ENCODE measurements at regions of chr11 and their contacts with region 1.

Region 1: DNA sequence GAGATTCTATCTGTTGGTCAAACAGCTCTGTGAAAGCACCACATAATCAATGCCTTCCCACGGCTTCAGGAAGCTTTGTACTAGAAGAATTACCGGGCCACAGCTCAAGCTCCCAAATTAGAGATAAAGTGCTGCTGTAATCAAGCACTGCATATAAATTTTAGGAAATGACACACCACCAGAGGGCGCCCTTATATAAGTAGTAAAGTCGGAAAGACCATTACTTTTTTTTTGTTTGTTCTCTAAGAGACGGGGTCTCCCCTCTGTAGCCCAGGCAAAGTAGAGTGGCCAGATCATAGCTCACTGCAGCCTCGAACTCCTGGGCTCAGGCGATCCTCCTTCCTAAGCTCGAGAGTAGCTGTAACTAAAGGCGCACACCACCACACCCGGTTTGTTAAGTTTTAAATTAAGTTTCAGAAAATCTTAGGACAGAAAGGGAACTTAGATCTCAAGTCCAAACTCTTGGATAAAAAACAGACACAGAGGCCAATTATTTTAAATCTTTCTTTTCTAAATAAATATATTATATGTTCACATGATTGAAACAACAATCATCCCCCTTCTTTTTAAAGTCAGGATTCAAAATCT is 32.6 kb downstream of the PRCP start:
- DNase-seq: peak; percentile 50 to 86 (median 79)
- ATAC-seq: peak; percentile 52
- H3K4me3 ChIP-seq: no peak overlapping the region
- H3K4me3 Mint-ChIP-seq: no peak overlapping the region
- H3K27ac ChIP-seq: no peak overlapping the region
- H3K27ac Mint-ChIP-seq: no peak overlapping the region
- H3K4me1 ChIP-seq: no peaks in the 10 kb centered on the region
- H3K4me1 Mint-ChIP-seq: peaks cover 9% of the 10 kb centered on the region
- H3K27me3 ChIP-seq: no peaks in the 10 kb centered on the region
- H3K27me3 Mint-ChIP-seq: no peaks in the 10 kb centered on the region
- CTCF ChIP-seq: peak; percentile 90

Region 2: DNA sequence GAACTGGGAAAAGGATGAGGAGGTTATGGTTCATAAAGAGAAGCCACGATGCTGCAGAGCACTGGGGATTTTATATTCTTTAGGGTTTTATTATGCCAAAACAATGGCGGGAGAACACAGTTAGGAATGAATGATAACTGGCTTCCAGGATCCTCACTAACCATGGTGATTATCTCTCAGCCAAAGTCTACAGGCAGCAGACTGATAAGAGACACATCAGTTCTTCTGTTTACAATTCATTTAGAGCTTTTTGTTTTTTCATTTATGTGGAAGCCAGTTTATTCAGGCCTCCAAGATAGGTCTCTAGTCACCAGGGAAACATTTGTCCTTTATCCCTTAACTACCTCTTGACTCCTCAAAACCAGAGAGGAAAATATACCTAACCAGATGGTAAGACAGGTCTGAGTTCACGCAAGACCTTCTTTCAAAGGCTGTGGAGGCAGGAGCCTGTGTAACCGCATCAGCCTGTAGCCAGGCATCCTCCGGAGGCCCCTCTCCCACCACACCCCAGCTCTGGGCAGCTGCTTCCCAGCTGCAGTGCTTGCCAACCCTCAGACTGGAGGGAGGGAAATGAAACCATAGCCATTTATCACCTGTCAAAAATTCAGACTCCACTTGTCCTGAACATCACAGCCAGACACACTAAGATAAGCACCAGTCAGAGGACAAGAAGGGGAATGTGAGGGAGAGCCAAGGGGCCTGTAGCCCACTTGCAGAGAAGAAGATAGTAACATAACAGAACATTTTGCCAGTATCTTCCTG is 76.7 kb before region 1 on chr11:
- CTCF ChIA-PET with region 1: no interaction called
- POLR2A ChIA-PET with region 1: no interaction called
- intact Hi-C with region 1: no loop called
- DNase-seq: no peak
- ATAC-seq: no peak
- H3K4me3 ChIP-seq: no peak overlapping the region
- H3K4me3 Mint-ChIP-seq: no peak overlapping the region
- H3K27ac ChIP-seq: no peak overlapping the region
- H3K27ac Mint-ChIP-seq: no peak overlapping the region
- H3K4me1 ChIP-seq: no peaks in the 10 kb centered on the region
- H3K4me1 Mint-ChIP-seq: no peaks in the 10 kb centered on the region
- H3K27me3 ChIP-seq: no peaks in the 10 kb centered on the region
- H3K27me3 Mint-ChIP-seq: peaks cover 3% of the 10 kb centered on the region
- CTCF ChIP-seq: no peak

Region 3: DNA sequence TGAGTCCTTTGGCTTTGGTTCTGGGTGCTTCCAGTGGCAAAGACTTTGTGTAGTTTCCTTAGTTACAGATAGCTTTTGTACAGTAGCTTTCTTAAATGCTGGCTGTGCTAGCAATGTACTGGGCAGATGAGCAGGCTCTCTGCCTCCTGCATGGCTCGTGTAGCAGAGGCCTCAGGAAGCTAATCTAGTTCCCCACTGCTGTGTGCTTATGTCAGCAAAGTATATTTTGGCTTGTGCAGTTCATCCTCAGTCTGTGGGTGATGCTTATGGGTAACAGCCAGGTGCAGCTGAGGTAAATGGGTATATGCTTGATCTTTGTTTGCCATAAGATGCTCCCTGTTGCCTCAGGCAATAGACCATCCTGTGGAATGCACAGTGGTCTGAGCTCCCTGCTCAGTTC is 64.9 kb before region 1 on chr11:
- CTCF ChIA-PET with region 1: no interaction called
- POLR2A ChIA-PET with region 1: no interaction called
- intact Hi-C with region 1: no loop called
- DNase-seq: no peak
- ATAC-seq: no peak
- H3K4me3 ChIP-seq: no peak overlapping the region
- H3K4me3 Mint-ChIP-seq: no peak overlapping the region
- H3K27ac ChIP-seq: no peak overlapping the region
- H3K27ac Mint-ChIP-seq: no peak overlapping the region
- H3K4me1 ChIP-seq: no peaks in the 10 kb centered on the region
- H3K4me1 Mint-ChIP-seq: no peaks in the 10 kb centered on the region
- H3K27me3 ChIP-seq: no peaks in the 10 kb centered on the region
- H3K27me3 Mint-ChIP-seq: peaks cover 25% of the 10 kb centered on the region
- CTCF ChIP-seq: no peak

Region 4: DNA sequence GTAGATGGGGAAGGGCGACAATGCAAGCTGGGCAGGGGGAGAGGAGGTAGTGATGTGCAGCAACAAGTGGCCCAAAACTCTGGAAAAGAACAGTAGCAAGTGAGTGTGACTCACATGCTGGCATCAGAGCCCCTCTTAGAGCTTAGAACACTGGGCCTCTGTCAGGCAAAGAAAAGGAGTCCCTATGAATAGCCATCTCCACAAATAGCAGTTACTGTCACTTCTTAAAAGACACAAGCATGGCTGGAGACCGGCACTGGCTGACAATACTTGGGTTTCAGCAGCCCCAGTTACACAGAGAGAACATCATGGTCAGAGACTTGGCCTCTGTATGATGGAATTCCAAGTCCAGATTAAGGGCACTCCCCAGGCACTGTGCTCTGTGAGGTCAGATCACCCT is 25.6 kb before region 1 on chr11:
- CTCF ChIA-PET with region 1: interaction called, 6 read pairs
- POLR2A ChIA-PET with region 1: no interaction called
- intact Hi-C with region 1: loop called in 1 of 2 experiments (anchors 2 kb)
- DNase-seq: no peak
- ATAC-seq: no peak
- H3K4me3 ChIP-seq: no peak overlapping the region
- H3K4me3 Mint-ChIP-seq: no peak overlapping the region
- H3K27ac ChIP-seq: no peak overlapping the region
- H3K27ac Mint-ChIP-seq: no peak overlapping the region
- H3K4me1 ChIP-seq: no peaks in the 10 kb centered on the region
- H3K4me1 Mint-ChIP-seq: no peaks in the 10 kb centered on the region
- H3K27me3 ChIP-seq: no peaks in the 10 kb centered on the region
- H3K27me3 Mint-ChIP-seq: no peaks in the 10 kb centered on the region
- CTCF ChIP-seq: no peak

Region 5: GRCh38 chr11:82900277-82901164 is 32.9 kb after region 1 on chr11 and contains the start of gene PRCP:
- CTCF ChIA-PET with region 1: interaction called, 15 read pairs
- POLR2A ChIA-PET with region 1: interaction called, 7 read pairs
- intact Hi-C with region 1: loop called (anchors 1 to 2 kb)
- DNase-seq: peak; percentile 84 to 96 (median 92)
- ATAC-seq: peak; percentile 69
- H3K4me3 ChIP-seq: peak within 1 kb of the TSS; percentile 76 to 93
- H3K4me3 Mint-ChIP-seq: peak within 1 kb of the TSS; percentile 99
- H3K27ac ChIP-seq: peak within 1 kb of the TSS; percentile 94 to 96
- H3K27ac Mint-ChIP-seq: peak within 1 kb of the TSS; percentile 100
- H3K4me1 ChIP-seq: peaks cover 26% of the 10 kb centered on the region
- H3K4me1 Mint-ChIP-seq: peaks cover 48% of the 10 kb centered on the region
- H3K27me3 ChIP-seq: no peaks in the 10 kb centered on the region
- H3K27me3 Mint-ChIP-seq: no peaks in the 10 kb centered on the region
- CTCF ChIP-seq: no peak
- total RNA-seq, gene PRCP: 23.9 to 27.8 TPM

Region 6: DNA sequence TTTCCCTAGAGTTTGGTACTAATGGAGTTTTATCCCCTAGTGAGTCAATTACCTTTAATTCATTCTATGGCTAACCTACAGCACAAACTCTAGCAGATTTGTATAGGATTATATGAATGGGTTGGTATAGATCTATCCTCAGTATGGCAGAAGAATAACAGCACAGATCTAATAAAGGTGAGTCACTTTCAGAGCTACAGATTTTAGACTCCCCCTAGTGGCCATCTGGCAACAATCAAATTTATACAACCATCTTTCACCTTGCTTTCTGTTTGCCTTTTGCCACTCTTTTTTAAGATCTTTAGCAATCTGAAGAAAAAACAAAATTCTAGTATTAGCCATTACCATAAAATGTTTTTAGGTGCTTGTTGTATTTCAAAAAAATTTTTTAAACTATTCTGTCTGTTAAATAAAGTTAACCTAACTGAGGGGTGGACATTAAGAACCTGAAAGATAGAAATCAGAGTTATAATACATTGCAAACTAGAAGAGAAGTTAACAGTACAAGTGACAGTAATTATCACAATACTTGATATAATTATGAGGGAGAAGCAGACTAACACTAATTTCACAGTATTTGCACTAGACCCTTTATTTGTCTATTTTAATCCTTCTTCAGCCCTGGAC is 59.8 kb after region 1 on chr11:
- CTCF ChIA-PET with region 1: interaction called, 9 read pairs
- POLR2A ChIA-PET with region 1: no interaction called
- intact Hi-C with region 1: loop called in 1 of 2 experiments (anchors 1 kb)
- DNase-seq: peak in 6 of 9 experiments; percentile 11 to 83 (median 31)
- ATAC-seq: peak; percentile 98
- H3K4me3 ChIP-seq: no peak overlapping the region
- H3K4me3 Mint-ChIP-seq: peak overlapping the region; percentile 26
- H3K27ac ChIP-seq: no peak overlapping the region
- H3K27ac Mint-ChIP-seq: peak overlapping the region; percentile 60
- H3K4me1 ChIP-seq: peaks cover 40% of the 10 kb centered on the region
- H3K4me1 Mint-ChIP-seq: peaks cover 53% of the 10 kb centered on the region
- H3K27me3 ChIP-seq: no peaks in the 10 kb centered on the region
- H3K27me3 Mint-ChIP-seq: no peaks in the 10 kb centered on the region
- CTCF ChIP-seq: peak; percentile 89

Region 7: DNA sequence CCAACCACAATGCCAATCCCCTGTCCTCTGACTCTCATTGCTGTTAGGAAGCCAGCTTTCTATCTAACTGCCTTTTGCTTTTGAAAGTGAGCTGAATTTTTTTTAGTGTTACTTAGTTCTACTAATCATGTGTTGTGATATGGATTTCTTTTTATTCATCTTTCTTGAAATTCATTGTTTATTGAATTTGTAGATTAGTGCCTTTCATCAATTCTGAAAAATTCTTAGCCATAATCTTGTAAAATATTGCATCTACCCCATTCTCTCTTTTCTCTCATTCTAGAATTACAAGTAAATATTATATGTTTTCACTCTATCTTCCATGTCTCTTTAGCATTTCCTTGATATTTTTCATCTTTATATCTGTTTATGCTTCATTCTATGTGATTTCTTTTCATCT is 81.8 kb after region 1 on chr11:
- CTCF ChIA-PET with region 1: no interaction called
- POLR2A ChIA-PET with region 1: no interaction called
- intact Hi-C with region 1: no loop called
- DNase-seq: no peak
- ATAC-seq: no peak
- H3K4me3 ChIP-seq: no peak overlapping the region
- H3K4me3 Mint-ChIP-seq: no peak overlapping the region
- H3K27ac ChIP-seq: no peak overlapping the region
- H3K27ac Mint-ChIP-seq: no peak overlapping the region
- H3K4me1 ChIP-seq: no peaks in the 10 kb centered on the region
- H3K4me1 Mint-ChIP-seq: peaks cover 5% of the 10 kb centered on the region
- H3K27me3 ChIP-seq: no peaks in the 10 kb centered on the region
- H3K27me3 Mint-ChIP-seq: no peaks in the 10 kb centered on the region
- CTCF ChIP-seq: no peak

Region 8: DNA sequence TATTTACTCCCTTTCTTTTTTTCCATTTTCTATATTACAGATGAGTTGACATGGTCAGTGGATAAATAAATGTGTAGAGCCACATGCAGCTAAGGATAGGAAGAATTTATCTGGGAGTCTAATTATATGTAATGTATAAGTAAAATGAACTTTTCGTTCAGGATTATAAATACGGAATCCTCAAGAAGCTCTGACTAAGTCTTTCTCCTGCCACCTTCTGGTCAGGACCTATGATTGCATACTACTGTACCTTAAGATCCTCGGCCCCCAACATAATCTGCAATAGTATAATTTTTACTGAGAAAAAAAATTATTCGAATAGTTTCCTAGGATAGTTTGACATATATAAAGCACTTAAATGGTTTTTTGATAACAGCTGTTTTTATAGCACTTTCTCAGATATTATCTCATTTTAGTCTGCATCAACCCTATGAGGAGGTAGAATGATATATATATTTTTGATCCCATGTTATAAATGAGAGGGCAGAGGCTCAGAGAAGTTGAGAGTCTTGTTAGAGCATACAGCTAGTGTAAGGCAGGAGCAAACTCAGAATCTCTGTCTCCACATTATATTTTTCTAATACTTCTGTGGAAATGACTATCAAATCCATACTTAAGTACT is 382.5 kb after region 1 on chr11:
- CTCF ChIA-PET with region 1: interaction called, 50 read pairs
- POLR2A ChIA-PET with region 1: interaction called, 5 read pairs
- intact Hi-C with region 1: loop called (anchors 1 to 2 kb)
- DNase-seq: peak in 4 of 9 experiments; percentile 11 to 72 (median 40)
- ATAC-seq: peak; percentile 76
- H3K4me3 ChIP-seq: no peak overlapping the region
- H3K4me3 Mint-ChIP-seq: no peak overlapping the region
- H3K27ac ChIP-seq: no peak overlapping the region
- H3K27ac Mint-ChIP-seq: no peak overlapping the region
- H3K4me1 ChIP-seq: no peaks in the 10 kb centered on the region
- H3K4me1 Mint-ChIP-seq: peaks cover 3% of the 10 kb centered on the region
- H3K27me3 ChIP-seq: no peaks in the 10 kb centered on the region
- H3K27me3 Mint-ChIP-seq: no peaks in the 10 kb centered on the region
- CTCF ChIP-seq: peak; percentile 86

Region 9: DNA sequence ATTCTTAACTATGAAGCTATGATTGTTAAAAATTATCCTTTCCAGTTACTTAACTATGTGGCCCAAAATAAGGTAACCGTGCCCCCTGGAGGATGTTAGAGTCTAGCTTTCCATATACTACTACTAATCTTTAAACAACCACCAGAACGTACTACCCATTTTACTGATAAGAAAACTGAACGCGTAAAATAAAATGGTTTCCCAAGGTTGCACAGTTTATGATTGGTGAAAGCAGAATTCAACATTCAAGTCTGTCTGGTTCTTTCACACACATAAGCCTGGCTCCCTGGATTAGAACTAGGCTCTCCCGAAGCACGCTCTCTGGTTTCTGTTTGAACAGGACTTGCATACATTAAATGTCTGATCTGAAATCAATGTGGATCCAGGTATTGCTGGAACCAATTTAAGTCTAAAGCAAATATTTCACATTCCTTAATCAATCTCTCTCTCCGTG is 856.4 kb after region 1 on chr11:
- CTCF ChIA-PET with region 1: no interaction called
- POLR2A ChIA-PET with region 1: no interaction called
- intact Hi-C with region 1: loop called in 1 of 2 experiments (anchors 5 kb)
- DNase-seq: peak in 2 of 9 experiments; percentile 18 to 38
- ATAC-seq: no peak
- H3K4me3 ChIP-seq: no peak overlapping the region
- H3K4me3 Mint-ChIP-seq: peak overlapping the region; percentile 65
- H3K27ac ChIP-seq: no peak overlapping the region
- H3K27ac Mint-ChIP-seq: no peak overlapping the region
- H3K4me1 ChIP-seq: no peaks in the 10 kb centered on the region
- H3K4me1 Mint-ChIP-seq: peaks cover 14% of the 10 kb centered on the region
- H3K27me3 ChIP-seq: no peaks in the 10 kb centered on the region
- H3K27me3 Mint-ChIP-seq: peaks cover 21% of the 10 kb centered on the region
- CTCF ChIP-seq: no peak

Measured in CD8-positive, alpha-beta T cell (primary cell).